Activated CD4-positive, alpha-beta memory T cell treated with anti-CD3 and anti-CD28 coated beads, Interleukin-2, amount 10 ng/mL, durations not matched to agents 7 days and 5 days (primary cell): ENCODE measurements at regions of chr9 and their contacts with region 1.

Region 1: GRCh38 chr9:137029058-137029936 is 1.3 kb upstream of the ABCA2 start:
- DNase-seq: peak; percentile 79
- H3K4me3 Mint-ChIP-seq: peak overlapping the region; percentile 76
- H3K27ac Mint-ChIP-seq: peak overlapping the region; percentile 91
- H3K4me1 Mint-ChIP-seq: peaks cover 57% of the 10 kb centered on the region
- H3K27me3 Mint-ChIP-seq: no peaks in the 10 kb centered on the region

Region 2: GRCh38 chr9:136895768-136896426 is 133.4 kb before region 1 on chr9:
- CTCF ChIA-PET with region 1: no interaction called
- POLR2A ChIA-PET with region 1: no interaction called
- DNase-seq: no peak
- H3K4me3 Mint-ChIP-seq: no peak overlapping the region
- H3K27ac Mint-ChIP-seq: no peak overlapping the region
- H3K4me1 Mint-ChIP-seq: peaks cover 29% of the 10 kb centered on the region
- H3K27me3 Mint-ChIP-seq: no peaks in the 10 kb centered on the region

Region 3: DNA sequence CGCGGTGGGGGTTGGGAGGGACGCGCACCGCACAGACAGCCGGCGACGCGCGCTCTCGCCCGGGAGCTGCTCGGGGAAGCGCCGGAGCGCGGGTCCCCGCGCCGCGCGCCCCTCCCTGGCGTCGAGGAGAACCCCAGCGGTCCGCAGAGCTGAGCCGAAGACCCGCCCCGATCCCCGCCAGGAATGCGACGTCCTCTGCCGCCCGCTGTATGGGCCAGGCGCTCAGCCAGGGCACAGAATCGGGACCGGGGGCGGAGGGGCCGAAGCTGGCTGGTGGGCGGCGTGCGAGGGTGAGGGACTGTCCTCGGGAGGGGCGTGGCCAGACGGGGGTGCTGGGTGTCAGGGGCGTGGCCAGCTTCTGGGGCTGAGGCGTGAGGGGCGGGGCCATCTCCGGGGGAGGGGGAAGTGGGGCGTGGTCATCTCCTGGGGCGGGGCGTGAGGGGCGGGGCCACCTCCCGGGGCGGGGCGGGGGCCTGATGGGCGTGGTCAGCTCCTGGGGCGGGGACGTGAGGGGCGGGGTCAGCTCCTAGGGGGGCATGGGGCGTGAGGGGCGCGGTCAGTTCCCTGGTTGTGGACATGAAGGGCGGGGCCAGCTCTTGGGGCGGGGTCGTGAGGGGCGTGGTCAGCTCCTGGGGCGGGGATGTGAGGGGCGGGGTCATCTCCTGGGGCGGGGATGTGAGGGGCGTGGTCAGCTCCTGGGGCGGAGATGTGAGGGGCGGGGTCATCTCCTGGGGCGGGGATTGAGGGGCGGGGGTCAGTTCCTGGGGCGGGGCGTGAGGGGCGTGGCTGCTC is 51.0 kb before region 1 on chr9:
- CTCF ChIA-PET with region 1: interaction called, 26 read pairs
- POLR2A ChIA-PET with region 1: interaction called, 13 read pairs
- DNase-seq: peak; percentile 83
- H3K4me3 Mint-ChIP-seq: no peak overlapping the region
- H3K27ac Mint-ChIP-seq: no peak overlapping the region
- H3K4me1 Mint-ChIP-seq: peaks cover 33% of the 10 kb centered on the region
- H3K27me3 Mint-ChIP-seq: peaks cover 1% of the 10 kb centered on the region

Region 4: GRCh38 chr9:137000177-137000883 is 29.0 kb before region 1 on chr9:
- CTCF ChIA-PET with region 1: interaction called, 26 read pairs
- POLR2A ChIA-PET with region 1: interaction called, 7 read pairs
- DNase-seq: peak; percentile 43
- H3K4me3 Mint-ChIP-seq: peak overlapping the region; percentile 29
- H3K27ac Mint-ChIP-seq: peak overlapping the region; percentile 72
- H3K4me1 Mint-ChIP-seq: peaks cover 49% of the 10 kb centered on the region
- H3K27me3 Mint-ChIP-seq: peaks cover 7% of the 10 kb centered on the region

Region 5: GRCh38 chr9:137046098-137046787 is 16.9 kb after region 1 on chr9 and contains the start of gene NPDC1:
- CTCF ChIA-PET with region 1: interaction called, 46 read pairs
- POLR2A ChIA-PET with region 1: interaction called, 12 read pairs
- DNase-seq: peak; percentile 86
- H3K4me3 Mint-ChIP-seq: peak within 1 kb of the TSS; percentile 76
- H3K27ac Mint-ChIP-seq: peak within 1 kb of the TSS; percentile 65
- H3K4me1 Mint-ChIP-seq: peaks cover 29% of the 10 kb centered on the region
- H3K27me3 Mint-ChIP-seq: peaks cover 33% of the 10 kb centered on the region
- total RNA-seq, gene NPDC1: 82.8 to 89.2 TPM

Region 6: DNA sequence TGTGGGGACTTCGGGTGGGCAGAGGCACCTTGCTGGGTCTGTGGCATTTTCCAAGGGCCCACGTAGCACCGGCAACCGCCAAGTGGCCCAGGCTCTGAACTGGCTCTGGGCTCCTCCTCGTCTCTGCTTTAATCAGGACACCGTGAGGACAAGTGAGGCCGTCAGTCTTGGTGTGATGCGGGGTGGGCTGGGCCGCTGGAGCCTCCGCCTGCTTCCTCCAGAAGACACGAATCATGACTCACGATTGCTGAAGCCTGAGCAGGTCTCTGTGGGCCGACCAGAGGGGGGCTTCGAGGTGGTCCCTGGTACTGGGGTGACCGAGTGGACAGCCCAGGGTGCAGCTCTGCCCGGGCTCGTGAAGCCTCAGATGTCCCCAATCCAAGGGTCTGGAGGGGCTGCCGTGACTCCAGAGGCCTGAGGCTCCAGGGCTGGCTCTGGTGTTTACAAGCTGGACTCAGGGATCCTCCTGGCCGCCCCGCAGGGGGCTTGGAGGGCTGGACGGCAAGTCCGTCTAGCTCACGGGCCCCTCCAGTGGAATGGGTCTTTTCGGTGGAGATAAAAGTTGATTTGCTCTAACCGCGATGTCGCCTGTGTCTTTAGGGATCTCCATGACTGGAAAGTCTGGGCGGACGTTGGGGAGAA is 79.4 kb after region 1 on chr9:
- CTCF ChIA-PET with region 1: no interaction called
- POLR2A ChIA-PET with region 1: no interaction called
- DNase-seq: no peak
- H3K4me3 Mint-ChIP-seq: no peak overlapping the region
- H3K27ac Mint-ChIP-seq: no peak overlapping the region
- H3K4me1 Mint-ChIP-seq: peaks cover 3% of the 10 kb centered on the region
- H3K27me3 Mint-ChIP-seq: no peaks in the 10 kb centered on the region